Prostate gland (tissue), 2 donors: ENCODE measurements at regions of chr2 and their contacts with region 1.

Region 1: GRCh38 chr2:37776487-37776886 is 105.0 kb upstream of the CDC42EP3 start:
- DNase-seq: no peak
- H3K4me3 ChIP-seq: no peak overlapping the region
- H3K27ac ChIP-seq: peak overlapping the region; percentile 69 to 77
- H3K4me1 ChIP-seq: no peaks in the 10 kb centered on the region
- H3K27me3 ChIP-seq: no peaks in the 10 kb centered on the region
- CTCF ChIP-seq: no peak
- POLR2A ChIP-seq: no peak

Region 2: DNA sequence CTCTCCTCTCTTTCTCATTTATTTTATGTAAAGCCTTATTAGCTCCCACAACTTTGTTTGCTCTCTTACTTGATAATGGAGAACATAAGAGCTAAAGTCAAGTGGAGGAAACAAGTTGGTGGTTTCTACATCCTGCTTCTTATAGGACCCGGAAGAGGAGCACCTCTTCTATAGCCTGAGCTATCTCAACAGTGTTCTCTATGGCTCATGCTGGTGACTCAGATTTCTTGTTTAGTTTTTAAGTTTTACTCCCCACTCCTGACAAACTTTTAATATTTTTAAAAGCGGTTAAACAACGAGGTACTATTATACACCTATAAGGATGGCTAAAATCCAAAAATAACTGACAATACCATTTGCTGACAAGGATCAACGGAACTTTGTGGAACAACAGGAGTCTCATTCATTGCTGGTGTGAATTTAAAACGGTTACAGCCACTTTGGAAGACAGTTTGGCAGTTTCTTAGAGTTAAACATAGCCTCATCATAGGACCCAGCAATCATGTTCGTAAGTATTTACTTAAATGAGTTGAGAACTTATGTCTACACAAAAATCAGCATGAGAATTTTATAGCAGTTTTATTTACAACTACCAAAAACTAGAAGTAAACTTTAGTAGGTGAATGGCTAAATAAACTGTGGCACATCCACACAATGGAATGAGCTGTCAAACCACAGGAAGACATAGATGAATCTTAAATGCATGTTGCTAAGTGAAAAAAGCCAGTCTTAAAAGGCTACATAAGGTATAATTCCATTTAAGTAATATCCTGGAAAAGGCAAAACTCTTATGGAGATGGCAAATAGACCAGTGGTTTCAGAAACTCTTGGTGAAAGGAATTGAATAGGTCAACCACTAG is 92.3 kb before region 1 on chr2:
- intact Hi-C with region 1: loop called (anchors 5 kb)
- DNase-seq: no peak
- H3K4me3 ChIP-seq: no peak overlapping the region
- H3K27ac ChIP-seq: no peak overlapping the region
- H3K4me1 ChIP-seq: peaks cover 6% of the 10 kb centered on the region
- H3K27me3 ChIP-seq: no peaks in the 10 kb centered on the region
- CTCF ChIP-seq: no peak
- POLR2A ChIP-seq: no peak

Region 3: GRCh38 chr2:38064801-38065501 is 288.5 kb after region 1 on chr2:
- intact Hi-C with region 1: no loop called
- DNase-seq: no peak
- H3K4me3 ChIP-seq: no peak overlapping the region
- H3K27ac ChIP-seq: peak overlapping the region in 1 of 2 donors; percentile 11
- H3K4me1 ChIP-seq: no peaks in the 10 kb centered on the region
- H3K27me3 ChIP-seq: no peaks in the 10 kb centered on the region
- CTCF ChIP-seq: no peak
- POLR2A ChIP-seq: no peak